ENCODE measurements at regions of chr19 and their contacts with region 1.

Region 1: DNA sequence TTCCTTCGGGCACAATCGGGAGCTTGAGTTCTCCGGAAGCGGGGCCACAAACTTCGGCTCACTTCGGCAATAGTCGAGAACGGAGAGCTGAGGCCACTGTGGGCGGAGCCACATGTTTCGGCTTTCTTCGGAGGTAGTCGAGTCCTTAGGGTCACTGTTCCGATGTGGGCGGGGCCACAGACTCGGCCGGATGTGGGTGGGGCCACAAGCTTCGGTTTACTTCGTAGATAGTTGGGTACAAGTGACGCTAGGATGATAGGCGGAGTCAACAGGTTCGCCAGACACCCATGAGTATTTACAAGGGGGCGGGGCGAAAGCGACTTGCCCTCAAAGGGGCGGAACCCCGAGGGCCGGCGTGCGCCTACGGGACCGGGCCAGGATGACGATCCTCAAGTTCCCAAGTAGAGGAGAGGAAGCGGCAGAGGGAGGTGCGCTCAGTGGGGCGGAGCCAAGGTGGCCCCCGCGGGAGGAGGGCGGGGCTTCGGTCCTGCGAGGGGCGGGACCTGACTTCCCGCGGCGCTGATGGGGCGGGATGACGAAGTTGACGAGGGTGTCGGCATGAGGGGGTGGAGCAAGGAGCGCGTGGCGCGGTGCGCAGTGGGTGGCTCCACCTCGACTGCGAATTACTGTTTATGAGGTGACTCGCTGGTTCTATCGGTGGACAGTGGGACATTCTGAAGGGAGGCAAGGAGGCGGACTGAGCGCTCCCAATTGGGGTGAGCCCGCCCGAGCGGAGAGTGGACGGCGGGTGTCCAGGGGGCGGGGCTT is 539 bp upstream of the MBOAT7 start:
- DNase-seq: peak; percentile 99 to 100 (median 100)
- H3K4me3 ChIP-seq: peak overlapping the region; percentile 57 to 99 (median 91)
- H3K27ac ChIP-seq: peak overlapping the region; percentile 83 to 100 (median 99)
- H3K27me3 ChIP-seq: no peaks in the 10 kb centered on the region
- CTCF ChIP-seq: peak in 4 of 56 donors; percentile 2 to 14 (median 8)

Region 2: GRCh38 chr19:54102421-54103169 is 87.3 kb before region 1 on chr19 and contains the start of gene NDUFA3:
- intact Hi-C with region 1: no loop called
- DNase-seq: peak; percentile 97 to 98 (median 98)
- H3K4me3 ChIP-seq: peak within 1 kb of the TSS; percentile 68 to 100 (median 90)
- H3K27ac ChIP-seq: peak within 1 kb of the TSS in 54 of 59 donors; percentile 13 to 88 (median 76)
- H3K27me3 ChIP-seq: peaks cover 0 to 6% (median 0%) of the 10 kb centered on the region in 45 donors
- CTCF ChIP-seq: peak in 30 of 56 donors; percentile 10 to 57 (median 32)
- total RNA-seq, gene NDUFA3: 100 to 299 (median 166) TPM

Region 3: DNA sequence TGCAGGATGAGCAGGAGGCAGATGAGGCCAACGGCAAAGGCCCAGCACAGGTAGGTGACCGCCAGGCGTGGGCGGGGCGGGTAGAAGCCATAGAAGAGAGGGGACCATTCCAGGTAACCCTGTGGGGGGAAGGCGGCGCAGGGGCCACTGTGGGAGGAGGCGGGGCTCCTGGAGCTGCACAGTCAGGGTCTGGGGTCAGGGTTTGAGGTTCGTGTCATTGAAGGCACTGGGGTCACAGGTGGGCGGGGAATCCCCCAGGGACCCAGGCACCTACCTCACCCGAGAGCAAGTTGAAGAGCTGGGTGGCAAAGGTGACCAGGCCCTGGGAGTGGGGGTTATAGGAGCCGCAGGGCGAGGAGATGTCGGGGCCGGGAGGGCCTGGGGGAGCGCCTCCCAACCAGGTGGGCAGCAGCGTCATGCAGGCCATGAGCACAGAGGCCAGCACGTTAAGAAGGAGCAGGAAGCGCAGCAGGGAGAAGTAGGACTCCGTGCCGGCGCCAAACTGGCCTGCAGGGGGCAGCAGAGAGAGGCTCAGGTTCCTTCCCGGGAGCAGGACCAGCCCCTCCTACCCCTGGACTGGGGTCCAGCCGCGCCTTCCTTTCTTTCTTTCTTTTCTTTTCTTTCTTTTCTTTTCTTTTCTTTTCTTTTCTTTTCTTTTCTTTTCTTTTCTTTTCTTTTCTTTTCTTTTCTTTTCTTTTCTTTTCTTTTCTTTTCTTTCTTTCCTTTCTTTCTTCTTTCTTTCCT is 21.6 kb before region 1 on chr19:
- intact Hi-C with region 1: loop called in 1 of 2 experiments (anchors 2 kb)
- DNase-seq: peak; percentile 85 to 94 (median 92)
- H3K4me3 ChIP-seq: peak overlapping the region in 2 of 59 donors; percentile 8
- H3K27ac ChIP-seq: no peak overlapping the region
- H3K27me3 ChIP-seq: peaks cover 0 to 5% (median 0%) of the 10 kb centered on the region in 45 donors
- CTCF ChIP-seq: peak; percentile 59 to 94 (median 87)

Region 4: GRCh38 chr19:54203151-54203611 is 13.3 kb after region 1 on chr19:
- intact Hi-C with region 1: loop called (anchors 1 kb)
- DNase-seq: no peak
- H3K4me3 ChIP-seq: peak overlapping the region in 12 of 59 donors; percentile 1 to 88 (median 15)
- H3K27ac ChIP-seq: peak overlapping the region in 1 of 59 donors; percentile 36
- H3K27me3 ChIP-seq: no peaks in the 10 kb centered on the region
- CTCF ChIP-seq: no peak